ENCODE measurements at regions of chr11 and their contacts with region 1.

Region 1: GRCh38 chr11:72024069-72024754 is 25.5 kb downstream of the IL18BP start:
- DNase-seq: no peak
- H3K4me3 ChIP-seq: no peak overlapping the region
- H3K4me3 Mint-ChIP-seq: no peak overlapping the region
- H3K27ac ChIP-seq: peak overlapping the region in 1 of 2 donors; percentile 18
- H3K27ac Mint-ChIP-seq: peak overlapping the region in 4 of 7 donors; percentile 23 to 77 (median 68)
- H3K4me1 ChIP-seq: no peaks in the 10 kb centered on the region
- H3K4me1 Mint-ChIP-seq: peaks cover 9% of the 10 kb centered on the region
- H3K27me3 ChIP-seq: no peaks in the 10 kb centered on the region
- H3K27me3 Mint-ChIP-seq: no peaks in the 10 kb centered on the region
- CTCF ChIP-seq: no peak

Region 2: DNA sequence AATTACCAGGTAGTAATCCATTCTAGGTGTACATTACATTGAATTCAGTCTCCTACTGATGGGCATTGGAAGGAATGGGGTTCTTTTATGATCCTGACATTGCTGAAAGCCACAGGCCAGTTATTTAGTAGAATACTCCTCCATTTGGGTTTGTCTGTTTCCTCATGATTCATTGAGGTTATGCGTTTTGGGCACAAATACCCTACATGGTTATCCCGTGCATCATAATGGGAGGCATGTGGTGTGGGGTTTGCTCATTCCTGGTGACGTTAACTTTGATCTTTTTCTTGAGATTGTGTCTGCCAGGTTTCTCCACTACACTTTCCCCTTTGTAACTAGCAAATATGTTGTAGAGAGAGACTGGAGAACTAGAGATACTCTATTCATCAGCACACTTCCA is 116.9 kb after region 1 on chr11:
- intact Hi-C with region 1: loop called in 1 of 2 experiments (anchors 2 kb)
- DNase-seq: no peak
- H3K4me3 ChIP-seq: no peak overlapping the region
- H3K4me3 Mint-ChIP-seq: no peak overlapping the region
- H3K27ac ChIP-seq: peak overlapping the region in 1 of 2 donors; percentile 55
- H3K27ac Mint-ChIP-seq: peak overlapping the region; percentile 23 to 85 (median 70)
- H3K4me1 ChIP-seq: peaks cover 71 to 76% of the 10 kb centered on the region in 2 donors
- H3K4me1 Mint-ChIP-seq: peaks cover 69% of the 10 kb centered on the region
- H3K27me3 ChIP-seq: no peaks in the 10 kb centered on the region
- H3K27me3 Mint-ChIP-seq: peaks cover 0 to 2% (median 0%) of the 10 kb centered on the region in 3 donors
- CTCF ChIP-seq: no peak

Region 3: DNA sequence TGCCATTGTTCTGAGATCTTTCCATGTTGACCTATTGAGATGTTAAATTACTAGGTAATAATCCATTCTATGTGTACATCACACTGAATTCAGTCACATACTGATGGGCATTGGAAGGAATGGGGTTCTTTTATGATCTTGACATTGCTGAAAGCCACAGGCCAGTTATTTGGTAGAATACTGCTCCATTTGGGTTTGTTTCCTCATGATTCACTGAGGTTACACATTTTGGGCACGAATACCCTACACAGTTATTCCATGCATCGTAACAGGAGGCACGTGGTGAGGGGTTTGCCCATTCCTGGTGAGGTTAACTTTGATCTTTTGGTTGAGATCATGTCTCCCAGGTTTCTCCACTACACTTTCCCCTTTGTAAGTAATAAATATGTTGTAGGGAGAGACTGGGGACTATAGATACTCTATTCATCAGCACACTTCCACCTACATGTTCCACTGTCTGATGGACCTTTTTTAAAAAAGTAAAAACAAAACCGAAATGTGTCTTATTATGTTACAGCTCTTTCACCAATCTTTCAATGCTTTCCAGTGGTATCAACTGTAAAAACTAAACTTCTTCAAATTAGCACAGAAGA is 155.7 kb after region 1 on chr11:
- intact Hi-C with region 1: loop called in 1 of 2 experiments (anchors 2 kb)
- DNase-seq: no peak
- H3K4me3 ChIP-seq: no peak overlapping the region
- H3K4me3 Mint-ChIP-seq: no peak overlapping the region
- H3K27ac ChIP-seq: no peak overlapping the region
- H3K27ac Mint-ChIP-seq: no peak overlapping the region
- H3K4me1 ChIP-seq: peaks cover 6 to 18% of the 10 kb centered on the region in 2 donors
- H3K4me1 Mint-ChIP-seq: peaks cover 13% of the 10 kb centered on the region
- H3K27me3 ChIP-seq: peaks cover 0 to 2% of the 10 kb centered on the region in 2 donors
- H3K27me3 Mint-ChIP-seq: peaks cover 2 to 9% (median 5%) of the 10 kb centered on the region in 3 donors
- CTCF ChIP-seq: no peak